Activated naive CD4-positive, alpha-beta T cell treated with anti-CD3 and anti-CD28 coated beads, Interleukin-2, amount 10 ng/mL, durations not matched to agents 7 days and 5 days (primary cell): ENCODE measurements at regions of chr11 and their contacts with region 1.

Region 1: DNA sequence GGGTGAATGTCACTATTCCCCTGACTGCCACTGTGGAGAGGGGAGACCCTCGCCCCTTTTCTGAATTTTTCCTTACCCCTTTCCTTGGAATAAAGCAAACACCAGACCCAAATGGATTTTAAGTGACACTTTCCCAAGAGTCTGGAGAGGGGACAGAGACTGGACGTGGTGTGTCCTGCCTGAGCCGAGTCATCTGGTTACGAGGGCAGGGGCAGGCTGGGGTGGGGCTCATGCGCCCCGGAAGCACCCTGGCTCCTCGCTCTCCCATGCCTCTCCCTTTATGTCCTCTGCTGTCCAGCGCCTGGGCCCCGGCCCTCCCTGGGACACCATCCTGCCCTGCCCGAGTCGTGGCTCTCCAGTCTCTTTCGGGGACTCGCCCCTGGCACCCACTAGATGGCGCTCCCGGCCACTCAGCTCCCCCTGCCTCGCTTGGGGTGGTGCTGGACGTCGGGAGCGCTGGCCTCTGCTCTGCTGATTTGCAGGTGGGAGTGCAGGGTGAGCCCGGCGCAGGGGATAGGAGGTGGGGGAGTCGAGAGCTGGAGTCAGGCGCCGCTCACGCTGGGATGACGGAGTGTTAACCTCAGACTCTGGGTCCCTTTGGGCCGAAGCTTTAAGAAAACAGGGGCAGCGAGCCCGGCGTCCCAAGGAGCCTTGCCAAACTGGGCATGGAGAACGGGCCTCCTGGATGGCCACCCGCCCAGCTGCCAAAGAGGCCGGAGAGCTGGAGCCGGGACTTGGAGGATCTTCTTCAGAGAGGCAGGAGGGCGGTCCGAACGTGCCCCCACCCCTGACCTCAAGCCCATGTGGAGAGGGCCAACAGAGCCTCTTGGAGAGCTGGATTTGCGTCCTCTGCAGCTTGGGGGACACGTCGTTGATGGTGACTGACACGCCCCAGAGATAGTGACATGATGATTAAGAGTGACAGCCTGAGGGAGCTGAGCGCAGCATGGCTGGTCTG is 89.9 kb downstream of the RPS6KA4 start:
- DNase-seq: peak; percentile 81
- H3K4me3 Mint-ChIP-seq: peak overlapping the region; percentile 62
- H3K27ac Mint-ChIP-seq: no peak overlapping the region
- H3K4me1 Mint-ChIP-seq: peaks cover 19% of the 10 kb centered on the region
- H3K27me3 Mint-ChIP-seq: peaks cover 77% of the 10 kb centered on the region

Region 2: GRCh38 chr11:64110465-64111375 is 338.2 kb before region 1 on chr11:
- CTCF ChIA-PET with region 1: no interaction called
- DNase-seq: no peak
- H3K4me3 Mint-ChIP-seq: no peak overlapping the region
- H3K27ac Mint-ChIP-seq: no peak overlapping the region
- H3K4me1 Mint-ChIP-seq: no peaks in the 10 kb centered on the region
- H3K27me3 Mint-ChIP-seq: no peaks in the 10 kb centered on the region

Region 3: GRCh38 chr11:64436000-64436399 is 12.9 kb before region 1 on chr11:
- CTCF ChIA-PET with region 1: interaction called, 18 read pairs
- DNase-seq: no peak
- H3K4me3 Mint-ChIP-seq: no peak overlapping the region
- H3K27ac Mint-ChIP-seq: no peak overlapping the region
- H3K4me1 Mint-ChIP-seq: no peaks in the 10 kb centered on the region
- H3K27me3 Mint-ChIP-seq: peaks cover 56% of the 10 kb centered on the region

Region 4: DNA sequence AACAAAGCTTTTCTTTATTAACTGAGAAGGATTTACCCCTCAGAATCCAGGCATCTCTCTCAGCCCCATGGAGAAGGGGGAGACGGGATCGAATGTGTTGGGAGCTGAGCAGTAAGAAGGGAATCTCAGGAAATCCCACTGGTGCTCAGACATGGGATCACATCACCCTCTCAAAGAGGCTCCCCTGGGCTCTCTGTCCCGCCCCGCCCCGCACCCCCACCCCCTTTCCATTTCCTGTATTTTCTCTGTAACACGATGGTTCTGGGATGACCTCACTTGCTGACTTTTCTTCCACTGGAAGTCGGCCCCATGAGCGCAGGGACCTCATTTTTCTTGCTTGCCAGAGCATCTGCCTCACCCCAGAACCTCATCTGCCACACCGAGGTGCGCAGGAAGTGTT is 10.1 kb after region 1 on chr11:
- CTCF ChIA-PET with region 1: interaction called, 11 read pairs
- DNase-seq: no peak
- H3K4me3 Mint-ChIP-seq: no peak overlapping the region
- H3K27ac Mint-ChIP-seq: no peak overlapping the region
- H3K4me1 Mint-ChIP-seq: no peaks in the 10 kb centered on the region
- H3K27me3 Mint-ChIP-seq: peaks cover 11% of the 10 kb centered on the region

Region 5: DNA sequence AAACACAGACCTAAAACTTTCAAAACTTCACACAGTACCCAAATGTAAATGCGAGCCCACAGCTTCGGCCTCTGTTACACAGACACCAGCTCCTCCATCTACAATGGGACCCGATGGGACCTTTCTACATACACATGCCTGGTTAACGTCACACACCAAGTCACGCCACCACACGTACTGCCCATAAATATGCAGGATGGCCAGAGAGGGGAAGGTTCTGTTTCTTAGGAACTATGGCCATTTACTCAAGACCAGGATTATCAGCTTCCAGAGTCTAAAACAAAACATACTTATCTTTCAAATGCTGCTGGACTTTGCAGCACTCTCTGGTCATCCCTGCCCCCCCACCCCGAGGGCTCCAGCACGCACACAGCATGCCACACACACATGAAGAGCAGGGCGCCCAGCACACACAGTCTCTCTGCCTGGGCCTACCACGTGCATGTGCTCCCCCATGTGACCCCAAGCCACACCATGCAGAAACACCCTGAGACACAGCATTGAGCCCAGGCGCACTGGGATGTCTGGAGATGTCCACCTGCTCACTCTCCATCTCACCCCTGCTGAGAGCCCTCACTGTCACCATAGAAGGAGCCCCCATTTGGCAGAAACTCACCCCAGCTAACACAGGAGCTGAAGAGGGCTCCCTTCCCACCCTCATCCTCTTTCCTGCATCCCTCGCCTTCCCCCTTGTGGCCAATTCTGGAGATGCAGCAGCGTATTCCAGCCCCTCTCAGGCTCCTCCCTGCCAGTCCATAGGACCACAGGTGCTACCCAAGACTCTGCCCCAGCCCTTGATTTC is 203.9 kb after region 1 on chr11:
- CTCF ChIA-PET with region 1: interaction called, 39 read pairs
- DNase-seq: peak; percentile 84
- H3K4me3 Mint-ChIP-seq: no peak overlapping the region
- H3K27ac Mint-ChIP-seq: no peak overlapping the region
- H3K4me1 Mint-ChIP-seq: peaks cover 4% of the 10 kb centered on the region
- H3K27me3 Mint-ChIP-seq: peaks cover 25% of the 10 kb centered on the region